ENCODE measurements at regions of chr21 and their contacts with region 1.

Region 1: DNA sequence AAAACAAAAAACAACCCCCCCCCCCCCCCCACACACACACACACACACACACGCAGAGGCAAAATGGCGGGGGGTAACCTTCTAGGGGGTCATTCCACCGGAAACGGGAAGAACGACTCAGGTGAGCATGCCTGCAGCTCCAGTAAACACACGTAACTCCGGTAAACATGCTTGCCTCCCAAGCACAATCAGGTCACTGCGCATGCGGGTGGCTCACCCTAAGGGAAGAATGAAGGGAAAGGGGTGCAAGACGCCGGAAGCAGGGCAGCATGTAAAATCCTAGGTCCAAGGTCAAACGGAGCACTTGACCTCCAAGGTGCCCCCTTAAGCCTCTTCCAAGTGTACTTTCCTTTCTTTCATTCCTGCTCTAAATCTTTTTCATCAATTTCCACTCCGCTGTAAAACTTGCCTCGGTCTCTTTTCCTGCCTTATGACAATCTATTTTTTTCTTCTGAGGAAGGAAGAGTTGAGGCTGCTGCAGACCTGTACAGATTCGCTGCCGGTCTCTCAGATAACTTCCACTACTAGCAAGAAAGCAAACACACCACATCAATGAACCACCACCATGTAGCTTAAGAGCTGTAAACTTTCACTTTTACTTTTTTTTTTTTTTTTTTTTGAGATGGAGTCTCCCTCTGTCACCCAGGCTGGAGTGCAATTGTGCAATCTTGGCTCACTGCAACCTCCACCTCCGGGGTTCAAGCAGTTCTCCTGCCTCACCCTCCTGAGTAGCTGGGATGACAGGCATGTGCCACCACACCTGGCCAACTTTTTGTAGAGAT is 21.0 kb upstream of the CBR3 start:
- DNase-seq: peak; percentile 50
- ATAC-seq: peak; percentile 64
- H3K4me3 Mint-ChIP-seq: peak overlapping the region; percentile 73
- H3K27ac Mint-ChIP-seq: peak overlapping the region; percentile 91
- H3K4me1 Mint-ChIP-seq: peaks cover 23% of the 10 kb centered on the region
- H3K27me3 Mint-ChIP-seq: no peaks in the 10 kb centered on the region
- CTCF ChIP-seq: no peak

Region 2: DNA sequence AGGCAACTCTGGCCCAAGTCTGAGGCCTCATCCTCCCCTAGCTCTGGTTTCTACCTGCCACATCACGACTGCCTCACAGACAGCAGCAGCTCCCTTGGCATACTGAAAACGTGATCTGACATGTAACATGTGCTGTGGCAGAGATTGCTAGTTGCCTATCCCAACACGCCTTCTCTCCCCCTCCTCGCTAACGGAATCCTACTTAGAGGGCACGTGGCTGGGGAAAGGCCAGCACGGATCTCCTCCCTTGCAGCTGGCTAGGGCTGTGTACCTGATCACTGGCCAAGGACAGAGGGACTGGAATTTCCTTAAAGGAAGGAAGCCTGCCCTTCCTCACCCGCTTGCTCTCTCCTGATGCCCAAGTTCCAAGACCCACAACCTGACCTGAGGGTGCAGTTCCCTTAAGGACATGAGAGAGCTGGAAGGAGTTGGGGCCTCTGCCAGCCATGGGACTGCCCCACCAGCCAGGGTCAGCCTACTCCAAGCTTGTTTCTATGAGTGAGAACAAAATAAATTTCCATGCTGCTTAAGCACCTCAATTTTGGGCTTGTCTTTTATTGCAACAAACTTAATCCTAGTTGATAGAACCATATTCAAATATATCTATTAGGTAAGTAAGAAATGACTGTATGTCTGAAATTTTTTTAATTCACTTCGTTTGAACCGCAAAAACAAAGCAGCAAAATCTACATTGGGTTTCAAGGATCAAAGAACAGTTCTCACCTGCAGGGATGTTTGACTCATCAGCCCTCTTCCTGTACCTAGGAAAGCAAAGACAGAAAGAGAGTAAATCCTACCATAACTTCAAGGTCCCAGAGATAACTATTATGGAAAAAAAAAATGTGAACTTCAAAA is 60.8 kb before region 1 on chr21:
- CTCF ChIA-PET with region 1: interaction called, 19 read pairs
- POLR2A ChIA-PET with region 1: no interaction called
- intact Hi-C with region 1: no loop called
- DNase-seq: no peak
- ATAC-seq: no peak
- H3K4me3 Mint-ChIP-seq: no peak overlapping the region
- H3K27ac Mint-ChIP-seq: no peak overlapping the region
- H3K4me1 Mint-ChIP-seq: peaks cover 34% of the 10 kb centered on the region
- H3K27me3 Mint-ChIP-seq: no peaks in the 10 kb centered on the region
- CTCF ChIP-seq: no peak

Region 3: GRCh38 chr21:36060159-36060921 is 53.5 kb before region 1 on chr21 and contains the start of gene SETD4:
- CTCF ChIA-PET with region 1: interaction called, 26 read pairs
- POLR2A ChIA-PET with region 1: interaction called, 5 read pairs
- intact Hi-C with region 1: no loop called
- DNase-seq: peak; percentile 94
- ATAC-seq: peak; percentile 93
- H3K4me3 Mint-ChIP-seq: peak within 1 kb of the TSS; percentile 83
- H3K27ac Mint-ChIP-seq: peak within 1 kb of the TSS; percentile 93
- H3K4me1 Mint-ChIP-seq: peaks cover 27% of the 10 kb centered on the region
- H3K27me3 Mint-ChIP-seq: no peaks in the 10 kb centered on the region
- CTCF ChIP-seq: no peak
- total RNA-seq, gene SETD4: 18.5 to 19.1 TPM

Region 4: DNA sequence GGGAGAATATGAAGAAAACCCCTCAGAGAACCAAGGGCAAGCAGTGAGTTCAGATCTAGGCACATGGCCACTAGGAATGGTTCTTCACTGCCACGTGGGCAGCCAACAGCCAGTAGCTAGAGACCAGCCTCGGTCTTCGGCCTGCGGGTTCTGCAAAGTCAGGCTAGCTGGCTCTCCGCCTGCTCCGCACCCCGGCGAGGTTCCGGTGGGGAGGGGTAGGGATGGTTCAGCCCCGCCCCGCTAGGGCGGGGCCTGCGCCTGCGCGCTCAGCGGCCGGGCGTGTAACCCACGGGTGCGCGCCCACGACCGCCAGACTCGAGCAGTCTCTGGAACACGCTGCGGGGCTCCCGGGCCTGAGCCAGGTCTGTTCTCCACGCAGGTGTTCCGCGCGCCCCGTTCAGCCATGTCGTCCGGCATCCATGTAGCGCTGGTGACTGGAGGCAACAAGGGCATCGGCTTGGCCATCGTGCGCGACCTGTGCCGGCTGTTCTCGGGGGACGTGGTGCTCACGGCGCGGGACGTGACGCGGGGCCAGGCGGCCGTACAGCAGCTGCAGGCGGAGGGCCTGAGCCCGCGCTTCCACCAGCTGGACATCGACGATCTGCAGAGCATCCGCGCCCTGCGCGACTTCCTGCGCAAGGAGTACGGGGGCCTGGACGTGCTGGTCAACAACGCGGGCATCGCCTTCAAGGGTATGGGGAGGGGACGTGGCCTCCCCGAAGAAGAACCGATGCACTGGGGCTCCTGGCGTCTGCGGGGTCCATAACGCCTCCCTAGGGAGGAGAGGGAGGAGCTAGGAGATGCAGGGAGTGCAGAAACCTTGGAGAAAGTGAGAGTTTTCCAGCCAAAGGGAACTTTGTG is 43.9 kb before region 1 on chr21 and contains the start of gene CBR1:
- CTCF ChIA-PET with region 1: interaction called, 18 read pairs
- POLR2A ChIA-PET with region 1: interaction called, 5 read pairs
- intact Hi-C with region 1: no loop called
- DNase-seq: peak; percentile 90
- ATAC-seq: peak; percentile 99
- H3K4me3 Mint-ChIP-seq: peak within 1 kb of the TSS; percentile 84
- H3K27ac Mint-ChIP-seq: peak within 1 kb of the TSS; percentile 89
- H3K4me1 Mint-ChIP-seq: peaks cover 47% of the 10 kb centered on the region
- H3K27me3 Mint-ChIP-seq: no peaks in the 10 kb centered on the region
- CTCF ChIP-seq: no peak
- total RNA-seq, gene CBR1: 37.1 to 43.2 TPM

Region 5: GRCh38 chr21:36075151-36075550 is 38.7 kb before region 1 on chr21:
- CTCF ChIA-PET with region 1: interaction called, 18 read pairs
- POLR2A ChIA-PET with region 1: interaction called, 4 read pairs
- intact Hi-C with region 1: no loop called
- DNase-seq: no peak
- ATAC-seq: no peak
- H3K4me3 Mint-ChIP-seq: no peak overlapping the region
- H3K27ac Mint-ChIP-seq: no peak overlapping the region
- H3K4me1 Mint-ChIP-seq: peaks cover 61% of the 10 kb centered on the region
- H3K27me3 Mint-ChIP-seq: no peaks in the 10 kb centered on the region
- CTCF ChIP-seq: no peak

Region 6: GRCh38 chr21:36125512-36126222 is 11.8 kb after region 1 on chr21:
- CTCF ChIA-PET with region 1: interaction called, 39 read pairs
- POLR2A ChIA-PET with region 1: interaction called, 3 read pairs
- intact Hi-C with region 1: no loop called
- DNase-seq: peak; percentile 79
- ATAC-seq: peak; percentile 71
- H3K4me3 Mint-ChIP-seq: no peak overlapping the region
- H3K27ac Mint-ChIP-seq: no peak overlapping the region
- H3K4me1 Mint-ChIP-seq: peaks cover 19% of the 10 kb centered on the region
- H3K27me3 Mint-ChIP-seq: no peaks in the 10 kb centered on the region
- CTCF ChIP-seq: peak; percentile 89

Region 7: GRCh38 chr21:36156339-36156814 is 42.5 kb after region 1 on chr21:
- CTCF ChIA-PET with region 1: no interaction called
- POLR2A ChIA-PET with region 1: no interaction called
- intact Hi-C with region 1: no loop called
- DNase-seq: peak; percentile 100
- ATAC-seq: peak; percentile 95
- H3K4me3 Mint-ChIP-seq: peak overlapping the region; percentile 82
- H3K27ac Mint-ChIP-seq: peak overlapping the region; percentile 49
- H3K4me1 Mint-ChIP-seq: peaks cover 26% of the 10 kb centered on the region
- H3K27me3 Mint-ChIP-seq: no peaks in the 10 kb centered on the region
- CTCF ChIP-seq: no peak

Measured in activated CD8-positive, alpha-beta T cell treated with anti-CD3 and anti-CD28 coated beads for 36 hours (primary cell).